AG04449 (cell line): ENCODE measurements at regions of chr20 and their contacts with region 1.

Region 1: GRCh38 chr20:23143098-23143497 is 57.0 kb upstream of the CD93 start:
- DNase-seq: no peak
- H3K4me3 ChIP-seq: no peak overlapping the region
- CTCF ChIP-seq: no peak

Region 2: DNA sequence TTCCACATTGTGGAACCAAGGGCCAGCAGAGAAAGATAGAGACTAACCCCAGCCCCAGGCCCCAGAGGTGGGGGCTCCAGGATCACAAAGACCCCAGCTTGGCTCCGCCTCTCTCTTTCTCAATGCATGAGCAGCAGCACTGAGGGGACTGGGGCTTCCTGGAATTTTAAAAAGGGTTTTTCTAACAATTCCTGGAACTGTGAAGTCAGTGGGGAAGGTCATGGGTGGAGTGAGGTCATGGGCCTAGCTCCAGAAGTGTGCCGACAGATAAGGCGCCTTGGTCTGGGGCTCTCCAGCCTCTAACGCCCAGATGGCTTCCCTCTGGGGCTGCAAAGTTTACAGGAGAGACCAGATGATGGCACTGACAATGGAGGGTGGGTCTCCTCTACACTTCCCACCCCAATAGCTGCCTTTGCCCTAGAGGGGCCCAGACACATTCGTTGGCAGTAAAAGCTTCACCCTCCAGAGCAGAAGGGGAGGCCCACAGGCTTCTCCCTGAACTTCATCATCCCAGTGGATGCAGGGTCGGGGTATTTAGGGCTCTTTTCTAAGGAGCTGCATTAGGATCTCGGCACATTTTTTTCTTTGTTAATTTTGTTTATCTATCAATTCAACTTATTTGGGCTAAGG is 10.1 kb before region 1 on chr20:
- CTCF ChIA-PET with region 1: interaction called, 10 read pairs
- POLR2A ChIA-PET with region 1: no interaction called
- DNase-seq: no peak
- H3K4me3 ChIP-seq: no peak overlapping the region
- CTCF ChIP-seq: no peak

Region 3: GRCh38 chr20:23156170-23156841 is 13.2 kb after region 1 on chr20:
- CTCF ChIA-PET with region 1: interaction called, 18 read pairs
- POLR2A ChIA-PET with region 1: interaction called, 4 read pairs
- DNase-seq: peak; percentile 21
- H3K4me3 ChIP-seq: no peak overlapping the region
- CTCF ChIP-seq: no peak